ENCODE measurements at regions of chr17 and their contacts with region 1.

Region 1: GRCh38 chr17:57130761-57131461 is 45.9 kb downstream of the AKAP1 start:
- DNase-seq: peak; percentile 76 to 88
- ATAC-seq: peak; percentile 91 to 96 (median 94)
- H3K4me3 ChIP-seq: peak overlapping the region in 1 of 10 donors; percentile 11
- H3K27ac ChIP-seq: no peak overlapping the region
- H3K4me1 ChIP-seq: peaks cover 0 to 5% (median 0%) of the 10 kb centered on the region in 9 donors
- H3K27me3 ChIP-seq: no peaks in the 10 kb centered on the region
- CTCF ChIP-seq: peak; percentile 80 to 95 (median 91)

Region 2: GRCh38 chr17:57174591-57174990 is 43.7 kb after region 1 on chr17:
- intact Hi-C with region 1: no loop called
- DNase-seq: no peak
- ATAC-seq: no peak
- H3K4me3 ChIP-seq: no peak overlapping the region
- H3K27ac ChIP-seq: no peak overlapping the region
- H3K4me1 ChIP-seq: no peaks in the 10 kb centered on the region
- H3K27me3 ChIP-seq: peaks cover 0 to 5% (median 3%) of the 10 kb centered on the region in 7 donors
- CTCF ChIP-seq: no peak

Region 3: DNA sequence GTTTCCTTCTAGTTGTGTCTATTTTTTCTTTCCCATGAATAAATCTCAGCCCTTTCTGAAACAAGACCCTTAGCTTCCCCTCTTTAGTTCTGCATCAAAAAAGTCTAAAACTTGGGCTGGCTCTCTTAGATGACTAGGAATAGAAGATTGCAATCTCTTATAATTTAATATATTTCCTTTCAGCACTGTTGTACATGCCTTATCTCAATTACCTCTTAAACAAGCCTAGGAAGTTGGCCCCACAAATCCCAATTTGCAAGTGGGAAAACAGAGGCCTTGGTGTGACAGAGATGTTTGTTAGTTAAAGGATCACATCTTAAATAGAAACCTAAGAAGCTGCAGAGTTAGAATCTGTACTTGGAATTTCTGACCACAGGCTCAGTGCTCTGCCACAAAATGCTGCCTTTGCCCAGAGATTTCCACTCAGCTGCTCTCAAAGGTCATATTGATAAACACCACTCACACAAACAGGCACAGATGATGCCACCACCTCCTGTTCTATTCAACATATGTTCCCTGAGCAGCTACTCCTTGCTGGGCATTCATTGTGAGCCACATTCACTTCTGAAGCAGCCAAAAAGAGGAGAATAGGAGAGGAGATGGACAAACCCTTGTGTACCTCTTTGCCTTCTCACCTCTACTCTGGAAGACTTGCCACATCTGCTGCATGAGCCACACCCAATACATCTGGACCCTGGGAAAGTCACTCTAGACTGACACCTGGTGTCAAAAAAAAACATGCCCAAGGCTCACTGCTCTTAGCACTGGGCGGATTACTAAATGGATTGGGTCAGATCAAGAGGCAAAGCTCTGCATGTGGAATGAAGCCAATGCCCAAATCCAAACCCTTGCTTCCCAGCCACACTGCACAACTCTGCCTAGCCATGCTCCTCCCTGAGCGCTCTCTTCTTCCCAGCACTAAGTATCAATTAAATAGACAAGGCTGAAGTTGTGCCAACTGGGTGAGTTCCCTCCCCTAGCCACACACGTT is 608.8 kb after region 1 on chr17:
- intact Hi-C with region 1: loop called in 3 of 10 experiments (anchors 1 to 10 kb)
- DNase-seq: no peak
- ATAC-seq: peak in 3 of 8 donors; percentile 49 to 66 (median 63)
- H3K4me3 ChIP-seq: no peak overlapping the region
- H3K27ac ChIP-seq: no peak overlapping the region
- H3K4me1 ChIP-seq: no peaks in the 10 kb centered on the region
- H3K27me3 ChIP-seq: peaks cover 0 to 7% (median 0%) of the 10 kb centered on the region in 7 donors
- CTCF ChIP-seq: peak in 7 of 9 donors; percentile 33 to 47 (median 40)